ENCODE measurements at regions of chr4 and their contacts with region 1.

Region 1: DNA sequence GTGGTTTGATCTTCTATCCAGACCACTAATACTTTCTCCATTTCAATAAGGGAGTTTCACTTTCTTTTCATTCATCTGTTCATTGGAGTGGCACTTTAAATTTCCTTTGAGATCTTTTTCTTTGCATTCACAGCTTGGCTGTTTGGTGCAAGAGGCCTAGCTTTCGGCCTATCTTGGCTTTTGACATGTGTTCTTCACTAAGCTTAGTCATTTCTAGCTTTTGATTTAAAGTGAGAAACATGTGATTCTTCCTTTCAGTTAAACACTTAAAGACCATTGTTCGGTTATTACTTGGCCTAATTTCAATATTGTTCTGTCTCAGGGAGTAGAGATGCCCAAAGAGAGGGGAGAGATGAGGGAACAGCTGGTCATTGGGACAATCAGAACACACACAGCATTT is 24.3 kb downstream of the CXCL13 start:
- DNase-seq: peak; percentile 37
- H3K4me3 Mint-ChIP-seq: no peak overlapping the region
- H3K27ac Mint-ChIP-seq: no peak overlapping the region
- H3K4me1 Mint-ChIP-seq: peaks cover 16% of the 10 kb centered on the region
- H3K27me3 Mint-ChIP-seq: no peaks in the 10 kb centered on the region

Region 2: GRCh38 chr4:77332696-77333270 is 297.1 kb before region 1 on chr4:
- CTCF ChIA-PET with region 1: no interaction called
- intact Hi-C with region 1: no loop called
- DNase-seq: no peak
- H3K4me3 Mint-ChIP-seq: no peak overlapping the region
- H3K27ac Mint-ChIP-seq: peak overlapping the region; percentile 70
- H3K4me1 Mint-ChIP-seq: no peaks in the 10 kb centered on the region
- H3K27me3 Mint-ChIP-seq: peaks cover 8% of the 10 kb centered on the region

Region 3: GRCh38 chr4:77358315-77358928 is 271.5 kb before region 1 on chr4:
- CTCF ChIA-PET with region 1: no interaction called
- intact Hi-C with region 1: no loop called
- DNase-seq: peak; percentile 23
- H3K4me3 Mint-ChIP-seq: no peak overlapping the region
- H3K27ac Mint-ChIP-seq: no peak overlapping the region
- H3K4me1 Mint-ChIP-seq: no peaks in the 10 kb centered on the region
- H3K27me3 Mint-ChIP-seq: no peaks in the 10 kb centered on the region

Region 4: DNA sequence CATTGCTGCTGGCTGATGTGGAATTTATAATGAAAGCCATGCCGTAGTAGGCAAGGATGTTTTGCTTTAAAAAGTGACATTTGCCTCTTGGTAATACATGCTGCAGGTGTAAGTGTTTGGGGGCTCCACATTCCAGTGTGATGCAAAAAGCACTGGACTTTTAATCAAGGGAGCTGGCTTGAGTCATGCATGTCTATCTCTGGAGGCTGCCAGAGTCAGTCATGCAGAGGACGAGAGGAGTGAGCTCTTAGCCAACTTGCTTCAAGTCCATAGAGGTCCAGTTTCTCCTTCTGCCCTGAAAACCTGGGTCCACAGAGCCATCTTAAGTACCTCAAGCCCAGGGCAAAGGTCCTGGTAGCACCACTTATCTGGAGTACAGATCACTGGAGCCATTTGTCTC is 35.9 kb before region 1 on chr4:
- CTCF ChIA-PET with region 1: interaction called, 25 read pairs
- intact Hi-C with region 1: loop called (anchors 1 kb)
- DNase-seq: no peak
- H3K4me3 Mint-ChIP-seq: no peak overlapping the region
- H3K27ac Mint-ChIP-seq: peak overlapping the region; percentile 75
- H3K4me1 Mint-ChIP-seq: peaks cover 49% of the 10 kb centered on the region
- H3K27me3 Mint-ChIP-seq: peaks cover 10% of the 10 kb centered on the region

Region 5: DNA sequence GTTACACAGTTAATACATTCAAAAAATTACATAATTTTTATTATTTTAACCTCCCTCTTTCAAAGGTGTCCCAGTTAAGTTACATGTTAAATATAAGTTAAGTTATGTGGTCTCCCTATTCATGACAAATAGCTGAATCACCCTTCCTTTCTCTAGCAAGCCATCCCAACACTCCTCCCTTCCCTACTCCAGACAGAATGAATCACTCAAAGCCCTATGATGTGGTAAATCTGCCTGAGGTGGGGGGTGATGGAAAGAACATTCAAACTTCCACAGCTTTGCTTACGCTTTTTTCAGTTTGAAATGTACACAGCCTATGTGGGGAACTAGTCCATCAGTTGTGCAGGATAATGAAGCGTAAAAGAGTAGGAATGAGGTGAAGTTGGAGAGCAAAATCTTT is 65.9 kb after region 1 on chr4:
- CTCF ChIA-PET with region 1: no interaction called
- intact Hi-C with region 1: no loop called
- DNase-seq: no peak
- H3K4me3 Mint-ChIP-seq: no peak overlapping the region
- H3K27ac Mint-ChIP-seq: no peak overlapping the region
- H3K4me1 Mint-ChIP-seq: no peaks in the 10 kb centered on the region
- H3K27me3 Mint-ChIP-seq: no peaks in the 10 kb centered on the region

Region 6: GRCh38 chr4:77715414-77716290 is 85.8 kb after region 1 on chr4:
- CTCF ChIA-PET with region 1: no interaction called
- intact Hi-C with region 1: loop called (anchors 5 kb)
- DNase-seq: no peak
- H3K4me3 Mint-ChIP-seq: no peak overlapping the region
- H3K27ac Mint-ChIP-seq: peak overlapping the region; percentile 53
- H3K4me1 Mint-ChIP-seq: peaks cover 33% of the 10 kb centered on the region
- H3K27me3 Mint-ChIP-seq: no peaks in the 10 kb centered on the region

Measured in activated naive CD4-positive, alpha-beta T cell treated with anti-CD3 and anti-CD28 coated beads for 36 hours (primary cell).